Activated naive CD4-positive, alpha-beta T cell treated with anti-CD3 and anti-CD28 coated beads for 36 hours (primary cell): ENCODE measurements at regions of chr7 and their contacts with region 1.

Region 1: DNA sequence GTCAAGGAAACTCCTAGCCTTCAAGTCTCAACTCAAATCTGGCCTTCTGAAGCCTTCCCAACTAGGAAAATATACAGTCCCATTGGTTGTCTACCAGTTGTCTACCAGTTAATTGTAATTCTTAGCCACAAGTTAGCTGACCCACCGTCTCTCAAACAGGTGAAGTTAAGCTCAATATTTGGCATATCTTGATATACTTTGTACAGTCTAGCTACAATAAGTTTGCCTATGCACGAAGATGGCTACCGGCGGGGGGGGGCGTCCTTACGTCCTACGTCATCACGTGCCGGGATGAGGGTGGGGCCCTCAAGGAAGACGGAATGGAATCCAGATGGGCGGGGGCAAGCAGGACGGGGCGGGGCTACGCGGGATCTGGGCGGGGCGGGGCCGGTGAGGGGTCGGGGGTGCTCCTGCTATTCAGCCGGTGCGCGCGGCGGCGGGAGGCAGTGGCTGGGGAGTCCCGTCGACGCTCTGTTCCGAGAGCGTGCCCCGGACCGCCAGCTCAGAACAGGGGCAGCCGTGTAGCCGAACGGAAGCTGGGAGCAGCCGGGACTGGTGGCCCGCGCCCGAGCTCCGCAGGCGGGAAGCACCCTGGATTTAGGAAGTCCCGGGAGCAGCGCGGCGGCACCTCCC is at the start of gene AHR:
- DNase-seq: peak; percentile 97
- H3K4me3 Mint-ChIP-seq: peak within 1 kb of the TSS; percentile 92
- H3K27ac Mint-ChIP-seq: peak within 1 kb of the TSS; percentile 91
- H3K4me1 Mint-ChIP-seq: peaks cover 25% of the 10 kb centered on the region
- H3K27me3 Mint-ChIP-seq: no peaks in the 10 kb centered on the region
- total RNA-seq, gene AHR: 24.5 to 27.5 TPM

Region 2: DNA sequence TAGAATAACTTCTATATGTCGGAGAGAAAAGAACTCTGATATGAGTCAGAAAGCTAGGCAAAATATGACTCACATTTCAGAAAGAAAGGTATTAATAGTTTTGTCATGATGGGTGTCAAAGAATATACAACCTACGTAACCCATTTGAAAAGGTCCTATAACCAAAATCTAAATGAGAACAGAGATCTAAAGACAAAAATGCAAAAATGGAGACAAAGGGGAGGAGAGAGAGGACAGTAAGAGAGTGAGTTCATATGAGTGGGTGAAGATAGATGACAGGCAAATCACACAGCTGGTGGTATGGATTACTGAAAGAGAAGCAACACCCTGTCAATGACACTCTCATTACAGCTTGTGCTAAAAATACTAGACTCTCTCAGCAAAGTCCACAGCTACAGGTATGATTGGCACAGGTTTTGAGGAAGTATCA is 678.3 kb before region 1 on chr7:
- CTCF ChIA-PET with region 1: no interaction called
- intact Hi-C with region 1: loop called (anchors 2 kb)
- DNase-seq: peak; percentile 33
- H3K4me3 Mint-ChIP-seq: peak overlapping the region; percentile 23
- H3K27ac Mint-ChIP-seq: peak overlapping the region; percentile 81
- H3K4me1 Mint-ChIP-seq: peaks cover 13% of the 10 kb centered on the region
- H3K27me3 Mint-ChIP-seq: no peaks in the 10 kb centered on the region

Region 3: DNA sequence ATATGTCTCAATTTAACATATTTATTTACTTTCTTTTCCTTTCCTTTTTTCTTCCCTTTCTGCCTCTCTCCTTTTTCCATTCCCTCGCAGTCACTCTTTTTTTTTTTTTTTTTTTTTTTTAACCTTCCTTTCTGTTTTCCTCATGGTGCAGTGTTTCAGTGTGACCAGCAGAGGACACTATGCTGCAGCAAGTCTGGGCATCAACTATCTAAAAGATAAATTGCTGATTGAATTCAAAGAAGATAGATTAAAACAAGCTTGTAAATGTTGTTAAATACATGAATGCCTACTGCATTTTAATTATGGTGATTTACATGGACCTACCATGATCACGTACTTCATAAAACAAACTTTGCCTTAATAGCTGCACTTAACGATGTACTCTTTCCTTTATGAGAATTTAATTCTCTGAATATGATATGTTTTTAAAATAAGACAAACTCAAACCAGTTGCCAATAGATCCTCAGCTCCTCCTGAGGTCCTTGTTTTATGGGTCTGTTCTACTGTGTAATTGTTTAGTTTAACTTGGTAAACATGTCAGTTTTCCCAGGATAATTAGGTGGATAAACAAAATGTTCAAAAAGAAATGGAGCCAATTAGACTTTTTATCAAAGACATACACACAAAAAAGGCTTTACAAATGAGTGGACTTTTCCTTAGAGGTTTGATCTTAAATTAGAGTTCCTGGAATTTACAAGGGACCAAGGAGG is 315.5 kb before region 1 on chr7:
- CTCF ChIA-PET with region 1: interaction called, 17 read pairs
- intact Hi-C with region 1: loop called (anchors 1 kb)
- DNase-seq: peak; percentile 30
- H3K4me3 Mint-ChIP-seq: no peak overlapping the region
- H3K27ac Mint-ChIP-seq: no peak overlapping the region
- H3K4me1 Mint-ChIP-seq: peaks cover 2% of the 10 kb centered on the region
- H3K27me3 Mint-ChIP-seq: peaks cover 7% of the 10 kb centered on the region

Region 4: DNA sequence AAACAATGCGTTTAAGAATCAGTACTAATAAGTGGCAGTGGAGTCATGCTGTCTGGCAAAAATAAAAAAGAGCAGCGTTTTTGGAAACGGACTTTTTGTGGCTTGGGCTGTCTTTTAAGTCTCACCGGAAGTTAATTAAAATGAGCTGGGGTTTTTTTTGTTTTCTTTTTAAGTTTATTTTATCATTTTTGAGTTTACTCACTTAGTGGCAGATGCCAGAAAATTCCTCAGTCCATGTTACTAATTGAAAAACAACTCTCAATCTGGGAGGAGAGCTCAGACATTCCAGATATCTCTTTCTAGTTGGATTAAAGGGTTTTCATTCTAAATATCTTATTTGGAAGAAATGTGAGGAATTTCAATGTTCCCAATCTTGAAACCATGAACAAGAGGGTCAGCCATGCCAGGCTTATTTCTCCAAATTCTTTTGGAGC is 282.7 kb before region 1 on chr7:
- CTCF ChIA-PET with region 1: no interaction called
- intact Hi-C with region 1: no loop called
- DNase-seq: no peak
- H3K4me3 Mint-ChIP-seq: no peak overlapping the region
- H3K27ac Mint-ChIP-seq: no peak overlapping the region
- H3K4me1 Mint-ChIP-seq: peaks cover 4% of the 10 kb centered on the region
- H3K27me3 Mint-ChIP-seq: peaks cover 2% of the 10 kb centered on the region

Region 5: DNA sequence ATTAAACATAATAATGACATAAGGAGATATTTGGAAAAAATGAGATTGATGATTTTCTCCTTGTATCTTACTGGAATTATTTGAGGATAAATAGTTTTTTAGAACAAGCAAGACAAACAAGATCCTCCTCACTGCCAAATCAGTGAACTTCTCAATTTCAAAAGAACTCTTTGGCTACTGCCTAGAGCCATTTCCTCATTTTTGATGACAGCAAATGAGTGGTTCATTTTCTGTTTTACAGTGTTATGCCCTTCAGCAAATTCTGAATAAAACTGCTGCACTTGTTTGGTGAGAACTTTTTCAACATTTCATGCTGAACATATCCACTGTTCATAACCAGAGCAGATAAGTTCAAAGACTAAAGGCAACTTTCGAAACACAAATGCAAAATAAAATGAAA is 42.4 kb before region 1 on chr7:
- CTCF ChIA-PET with region 1: interaction called, 6 read pairs
- intact Hi-C with region 1: loop called (anchors 1 kb)
- DNase-seq: no peak
- H3K4me3 Mint-ChIP-seq: no peak overlapping the region
- H3K27ac Mint-ChIP-seq: no peak overlapping the region
- H3K4me1 Mint-ChIP-seq: peaks cover 6% of the 10 kb centered on the region
- H3K27me3 Mint-ChIP-seq: no peaks in the 10 kb centered on the region

Region 6: GRCh38 chr7:17444673-17445072 is 146.3 kb after region 1 on chr7:
- CTCF ChIA-PET with region 1: no interaction called
- intact Hi-C with region 1: loop called (anchors 1 kb)
- DNase-seq: no peak
- H3K4me3 Mint-ChIP-seq: no peak overlapping the region
- H3K27ac Mint-ChIP-seq: no peak overlapping the region
- H3K4me1 Mint-ChIP-seq: peaks cover 11% of the 10 kb centered on the region
- H3K27me3 Mint-ChIP-seq: peaks cover 5% of the 10 kb centered on the region

Region 7: DNA sequence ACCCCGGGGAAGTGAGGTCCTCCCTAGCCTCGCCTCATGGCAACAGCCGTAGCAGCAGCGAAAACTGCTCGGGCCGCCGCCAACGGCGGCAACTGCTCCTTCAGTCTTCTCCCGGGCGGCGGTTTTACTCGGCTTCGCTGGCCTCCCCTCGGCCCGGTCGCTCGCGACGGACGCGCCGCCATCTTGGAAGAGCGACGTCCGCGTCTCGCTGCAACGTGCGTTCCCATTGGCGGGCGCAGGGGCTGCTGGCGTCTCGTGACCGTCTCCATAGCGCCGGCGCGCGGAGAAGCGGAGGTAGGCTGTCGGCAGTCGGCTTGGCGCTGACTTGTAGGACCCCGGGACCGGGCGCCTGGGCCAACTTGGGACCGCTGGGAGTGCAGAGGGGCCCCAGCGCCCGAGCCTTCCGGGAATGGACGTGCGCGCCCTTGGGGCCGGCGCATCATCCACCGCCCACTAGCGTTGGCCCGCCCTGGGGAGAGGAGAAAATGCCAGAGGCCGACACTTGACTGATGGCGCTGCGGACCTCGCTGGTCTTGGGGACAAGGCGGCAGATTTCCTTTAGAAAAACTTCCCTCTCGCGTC is 642.1 kb after region 1 on chr7 and contains the start of gene SNX13:
- CTCF ChIA-PET with region 1: no interaction called
- intact Hi-C with region 1: loop called (anchors 1 kb)
- DNase-seq: peak; percentile 91
- H3K4me3 Mint-ChIP-seq: peak within 1 kb of the TSS; percentile 99
- H3K27ac Mint-ChIP-seq: peak within 1 kb of the TSS; percentile 92
- H3K4me1 Mint-ChIP-seq: peaks cover 41% of the 10 kb centered on the region
- H3K27me3 Mint-ChIP-seq: no peaks in the 10 kb centered on the region
- total RNA-seq, gene SNX13: 19.5 to 20.3 TPM